GM10248 (cell line): ENCODE measurements at regions of chr3 and their contacts with region 1.

Region 1: GRCh38 chr3:83928391-83928790 is 1030.4 kb upstream of the CADM2 start:
- DNase-seq: no peak
- CTCF ChIP-seq: peak; percentile 13

Region 2: DNA sequence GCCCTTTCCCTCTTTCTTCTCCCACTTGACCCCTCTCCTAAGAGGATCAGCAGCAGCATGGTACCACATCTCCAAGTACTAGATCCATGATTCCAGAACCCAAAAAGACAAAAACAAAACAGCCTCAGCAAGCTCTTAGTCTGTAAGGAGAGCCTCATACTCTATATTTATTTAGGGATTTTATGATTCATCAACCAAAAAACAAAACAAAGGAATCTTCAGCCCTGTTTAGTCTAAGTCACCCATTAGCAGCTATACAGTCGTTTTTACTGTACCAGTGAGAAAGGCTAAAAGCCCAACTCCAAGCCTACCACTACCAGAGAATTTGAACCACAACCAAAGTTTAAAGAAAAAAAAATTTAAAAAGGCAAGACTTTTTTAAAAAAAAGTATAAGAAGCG is 10.1 kb after region 1 on chr3:
- CTCF ChIA-PET with region 1: interaction called, 22 read pairs
- POLR2A ChIA-PET with region 1: no interaction called
- DNase-seq: no peak
- CTCF ChIP-seq: no peak

Region 3: DNA sequence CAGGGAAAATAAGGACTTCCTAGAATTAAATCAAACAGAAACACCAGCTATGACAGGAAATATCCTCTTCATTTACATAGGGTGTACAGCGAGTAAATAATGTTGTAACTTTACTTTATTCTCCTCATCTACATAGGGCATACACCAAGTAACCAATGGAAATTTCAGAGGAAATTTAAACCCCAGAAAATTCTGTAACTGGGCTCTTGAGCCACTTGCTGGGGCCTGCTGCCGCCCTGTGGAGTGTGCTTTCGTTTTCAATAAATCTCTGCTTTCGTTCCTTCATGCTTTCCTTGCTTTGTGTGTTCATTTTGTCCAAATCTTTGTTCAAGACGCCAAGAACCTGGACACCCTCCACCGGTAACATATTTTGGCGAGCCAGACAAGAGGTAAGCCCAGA is 40.0 kb after region 1 on chr3:
- CTCF ChIA-PET with region 1: no interaction called
- POLR2A ChIA-PET with region 1: no interaction called
- DNase-seq: no peak
- CTCF ChIP-seq: no peak